Right cardiac atrium (tissue), 5 donors: ENCODE measurements at regions of chr22 and their contacts with region 1.

Region 1: DNA sequence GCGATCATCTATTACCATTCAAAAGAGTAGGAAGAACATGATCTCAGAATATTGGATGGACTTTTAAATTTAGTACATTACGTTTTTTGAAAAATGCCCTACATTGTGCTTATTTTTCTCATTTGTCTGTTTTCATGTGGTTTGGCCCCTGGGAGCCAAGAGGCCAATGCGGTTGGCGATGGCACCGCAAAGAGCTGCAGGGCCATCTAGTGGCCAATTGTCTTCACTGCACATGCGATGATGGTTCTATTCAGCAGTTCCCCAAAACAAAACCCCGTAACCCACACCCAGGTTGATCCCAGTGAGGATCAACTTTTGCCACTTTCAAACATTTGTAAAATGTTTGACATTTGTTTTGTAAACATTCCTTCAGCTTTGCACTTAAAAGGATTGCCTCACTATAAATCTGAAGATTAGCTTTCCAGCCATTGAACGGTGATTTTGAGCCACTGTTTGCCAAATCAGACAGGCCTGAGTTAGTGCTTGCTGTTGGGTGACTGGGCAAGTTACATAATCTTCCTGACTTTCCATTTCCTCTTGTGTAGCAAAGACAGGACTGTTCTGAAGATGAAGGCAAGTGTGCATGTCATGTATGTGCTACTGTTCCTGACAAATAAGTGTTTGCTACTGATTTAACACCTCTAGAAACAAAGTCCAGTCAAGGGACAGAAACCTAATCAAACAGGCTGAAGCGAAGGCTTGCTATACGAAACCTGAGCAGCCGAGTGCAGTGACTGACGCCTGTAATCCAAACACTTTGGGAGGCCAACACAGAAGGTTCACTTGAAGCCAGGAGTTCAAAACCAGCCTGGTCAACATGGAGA is 29.2 kb upstream of the XBP1 start:
- DNase-seq: peak; percentile 70 to 89 (median 87)
- ATAC-seq: peak; percentile 88 to 89
- H3K4me3 ChIP-seq: no peak overlapping the region
- H3K27ac ChIP-seq: no peak overlapping the region
- H3K4me1 ChIP-seq: no peaks in the 10 kb centered on the region
- H3K27me3 ChIP-seq: no peaks in the 10 kb centered on the region

Region 2: DNA sequence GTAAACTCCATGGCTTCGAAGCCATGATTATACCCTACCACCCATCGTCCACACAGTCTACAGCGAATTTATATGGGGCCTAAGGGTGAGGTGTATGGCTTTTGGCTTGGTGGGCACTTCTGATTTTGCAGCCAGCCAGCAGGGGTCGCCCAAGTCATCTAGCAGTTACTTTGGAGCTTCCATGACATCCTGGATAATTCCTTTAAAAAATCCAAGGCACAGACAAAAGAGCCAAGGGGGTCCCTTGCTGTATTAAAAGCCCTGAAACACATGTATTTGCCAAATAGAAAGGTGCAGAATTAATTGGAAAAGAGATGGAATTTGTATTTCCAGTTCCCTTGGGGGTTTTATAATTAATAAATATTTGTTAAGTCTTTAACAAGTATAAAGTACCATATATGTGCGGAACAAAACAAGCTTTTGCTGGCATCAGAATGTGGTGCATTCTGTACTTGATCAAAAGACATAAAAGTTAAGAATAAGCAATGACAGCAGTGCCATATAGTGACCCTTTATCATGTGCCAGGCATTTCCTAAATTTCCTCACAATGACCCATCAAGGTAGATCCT is 777.7 kb before region 1 on chr22:
- intact Hi-C with region 1: loop called in 1 of 4 experiments (anchors 10 kb)
- DNase-seq: peak; percentile 71 to 91 (median 88)
- ATAC-seq: peak in 1 of 2 donors; percentile 67
- H3K4me3 ChIP-seq: no peak overlapping the region
- H3K27ac ChIP-seq: no peak overlapping the region
- H3K4me1 ChIP-seq: peaks cover 6% of the 10 kb centered on the region
- H3K27me3 ChIP-seq: no peaks in the 10 kb centered on the region

Region 3: GRCh38 chr22:28600546-28601143 is 228.9 kb before region 1 on chr22:
- intact Hi-C with region 1: loop called (anchors 5 to 10 kb)
- DNase-seq: no peak
- ATAC-seq: peak; percentile 16 to 28
- H3K4me3 ChIP-seq: no peak overlapping the region
- H3K27ac ChIP-seq: no peak overlapping the region
- H3K4me1 ChIP-seq: no peaks in the 10 kb centered on the region
- H3K27me3 ChIP-seq: no peaks in the 10 kb centered on the region